H1 (cell line): ENCODE measurements at regions of chr1 and their contacts with region 1.

Region 1: DNA sequence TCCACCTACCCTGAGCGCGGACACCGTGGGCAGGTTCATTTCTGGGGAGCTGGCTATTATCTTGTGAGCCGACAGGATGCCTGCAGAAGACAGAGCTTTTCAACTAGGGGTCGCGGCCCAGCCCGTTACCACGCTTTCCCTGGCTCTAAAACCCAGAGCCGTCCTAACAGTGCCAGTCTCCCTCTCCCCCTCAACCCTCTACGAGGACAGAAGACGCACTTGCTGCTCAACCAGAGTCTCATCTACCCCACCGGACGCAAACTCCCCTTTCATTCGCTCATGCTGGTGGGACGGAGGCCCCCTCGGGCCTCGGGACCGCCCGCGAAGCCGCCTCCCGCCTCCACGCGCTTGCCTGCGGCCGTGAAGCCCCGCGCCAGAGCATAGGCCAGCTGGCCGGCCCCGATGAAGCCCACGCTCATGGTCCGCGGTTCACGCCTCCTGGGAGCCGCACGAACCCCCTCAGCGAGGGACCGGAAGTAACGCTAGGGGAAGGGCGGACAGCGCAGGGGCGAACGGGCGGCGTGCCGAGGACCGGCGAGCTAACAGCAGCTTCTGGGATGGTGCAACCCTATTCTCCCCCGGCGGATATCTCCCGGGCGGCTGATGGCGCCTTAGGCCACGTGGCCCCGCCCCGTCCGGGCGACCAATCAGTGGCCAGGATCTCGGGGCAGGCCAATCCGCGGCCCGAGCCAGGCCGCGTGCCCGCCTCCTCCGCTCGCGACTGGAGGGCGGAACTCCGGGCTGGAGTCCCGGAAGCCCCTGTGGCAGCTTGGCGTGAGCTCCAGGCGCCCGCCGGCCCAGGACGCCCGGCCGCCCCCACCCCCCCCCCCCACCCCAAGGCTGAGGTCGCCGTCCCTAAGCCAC is at the start of gene PYCR2:
- DNase-seq: peak; percentile 88 to 92
- H3K4me3 ChIP-seq: peak within 1 kb of the TSS; percentile 91 to 97 (median 93)
- H3K27ac ChIP-seq: peak within 1 kb of the TSS; percentile 69
- H3K4me1 ChIP-seq: peaks cover 0 to 9% (median 5%) of the 10 kb centered on the region in 4 experiments; a peak in 4 of 7 replicates
- H3K27me3 ChIP-seq: no peaks in the 10 kb centered on the region
- CTCF ChIP-seq: peak in 1 of 3 experiments; percentile 7; a peak in 1 of 4 replicates
- EP300 ChIP-seq: no peak
- POLR2A ChIP-seq: peak in 1 of 2 experiments; percentile 87; a peak in 2 of 3 replicates
- RAD21 ChIP-seq: no peak; a peak in 1 of 4 replicates
- total RNA-seq, gene PYCR2: 84.3 and 84.6 TPM in 2 replicates

Region 2: DNA sequence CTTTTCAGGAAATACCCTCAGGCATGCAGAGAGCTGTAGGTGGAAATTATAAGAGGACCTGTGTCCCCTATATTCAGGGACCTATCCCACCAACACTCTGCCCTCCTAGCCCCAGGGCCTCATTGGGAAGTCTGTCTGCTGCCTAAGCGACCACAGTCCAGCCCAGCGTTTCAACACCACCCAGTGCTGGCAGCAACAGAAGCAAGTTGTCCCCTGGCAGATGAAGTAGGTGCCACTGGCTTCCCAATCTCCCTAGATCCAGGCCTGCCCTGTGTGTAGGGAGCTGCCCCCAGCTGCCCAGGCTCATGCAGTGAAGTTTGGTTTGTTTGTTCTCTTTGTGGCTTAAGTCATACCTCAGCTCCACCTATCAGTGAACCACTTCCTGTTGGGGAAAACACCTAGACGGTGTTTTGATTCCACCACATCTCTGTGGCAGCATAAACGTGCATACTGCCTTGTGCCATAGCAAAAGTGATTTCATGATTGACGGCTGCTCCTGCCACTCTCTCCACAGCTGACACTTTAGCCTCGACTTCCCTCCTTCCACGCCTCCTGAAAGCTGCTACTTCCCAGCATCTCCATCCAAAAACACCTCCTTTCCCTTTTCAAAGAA is 26.9 kb before region 1 on chr1:
- CTCF ChIA-PET with region 1: no interaction called
- POLR2A ChIA-PET with region 1: interaction called, 12 read pairs
- DNase-seq: no peak
- H3K4me3 ChIP-seq: no peak overlapping the region
- H3K27ac ChIP-seq: no peak overlapping the region
- H3K4me1 ChIP-seq: peaks cover 0 to 21% (median 19%) of the 10 kb centered on the region in 4 experiments; a peak in 6 of 7 replicates
- H3K27me3 ChIP-seq: no peaks in the 10 kb centered on the region
- CTCF ChIP-seq: no peak
- EP300 ChIP-seq: no peak
- POLR2A ChIP-seq: no peak
- RAD21 ChIP-seq: no peak

Region 3: DNA sequence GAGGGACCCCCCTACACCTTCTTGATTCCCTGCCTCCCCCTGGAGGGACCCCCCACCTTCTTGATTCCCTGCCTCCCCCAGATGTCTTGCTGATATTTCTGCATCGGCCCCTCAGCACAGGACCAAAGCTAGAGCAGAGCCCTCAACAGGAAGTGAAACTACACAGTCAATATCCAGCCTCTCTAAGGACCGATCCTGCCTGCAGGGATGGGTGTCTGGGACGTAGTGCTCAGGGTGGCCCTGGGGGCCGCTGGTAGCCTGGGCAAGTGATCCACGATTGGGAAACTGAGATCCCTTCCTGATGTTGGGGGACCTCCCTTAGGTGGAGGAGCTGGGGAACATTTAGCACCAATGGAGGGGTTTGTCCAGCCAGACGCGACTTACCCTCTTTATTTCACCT is 21.0 kb after region 1 on chr1:
- CTCF ChIA-PET with region 1: interaction called, 4 read pairs
- POLR2A ChIA-PET with region 1: interaction called, 16 read pairs
- DNase-seq: no peak
- H3K4me3 ChIP-seq: no peak overlapping the region
- H3K27ac ChIP-seq: no peak overlapping the region
- H3K4me1 ChIP-seq: peaks cover 6 to 22% (median 13%) of the 10 kb centered on the region in 4 experiments
- H3K27me3 ChIP-seq: peaks cover 0 to 14% (median 9%) of the 10 kb centered on the region in 4 experiments; a peak in 4 of 7 replicates
- CTCF ChIP-seq: no peak
- EP300 ChIP-seq: no peak
- POLR2A ChIP-seq: no peak
- RAD21 ChIP-seq: no peak